ENCODE measurements at regions of chr11 and their contacts with region 1.

Region 1: GRCh38 chr11:11841723-11842420 is at the start of gene USP47:
- DNase-seq: peak; percentile 79
- ATAC-seq: peak; percentile 68
- H3K4me3 ChIP-seq: peak within 1 kb of the TSS; percentile 95
- H3K27ac ChIP-seq: peak within 1 kb of the TSS; percentile 72
- H3K4me1 ChIP-seq: peaks cover 33% of the 10 kb centered on the region
- H3K27me3 ChIP-seq: no peaks in the 10 kb centered on the region
- CTCF ChIP-seq: peak; percentile 54
- total RNA-seq, gene USP47: 33.5 and 45.2 TPM in 2 replicates

Region 2: DNA sequence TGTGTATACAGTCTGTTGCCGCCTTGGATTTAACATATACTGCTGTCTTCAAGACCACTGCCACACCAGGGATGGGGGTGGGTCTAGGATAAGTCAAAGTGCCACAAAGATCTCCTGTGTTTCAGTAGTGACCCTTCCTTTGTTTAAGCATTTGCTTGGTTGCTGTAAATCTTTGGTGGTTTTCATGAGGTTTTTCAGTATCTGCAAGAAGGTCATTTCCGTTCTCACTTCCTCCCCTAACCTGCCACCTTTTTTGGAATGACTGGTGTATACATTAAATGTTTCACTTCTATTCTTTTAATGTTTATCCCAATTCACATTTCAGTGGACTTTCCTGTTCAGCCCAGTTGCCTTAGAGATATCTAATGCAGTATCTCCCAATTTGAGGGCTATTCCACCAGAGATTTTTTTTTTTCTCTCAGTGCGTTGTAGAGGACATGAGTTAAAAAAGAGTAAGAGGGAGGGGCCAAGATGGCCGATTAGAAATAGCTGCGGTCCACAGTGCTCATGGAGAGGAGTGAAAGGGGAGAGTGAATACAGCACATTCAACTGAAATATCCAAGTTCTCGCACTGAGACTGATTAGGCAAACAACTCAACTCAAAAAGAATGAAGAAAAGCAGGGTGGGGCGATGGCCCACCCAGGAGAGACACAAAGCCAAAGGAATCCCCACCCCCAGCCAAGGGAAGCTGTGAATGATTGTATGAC is 43.1 kb after region 1 on chr11:
- CTCF ChIA-PET with region 1: no interaction called
- POLR2A ChIA-PET with region 1: interaction called, 5 read pairs
- intact Hi-C with region 1: loop called (anchors 5 kb)
- DNase-seq: no peak
- ATAC-seq: no peak
- H3K4me3 ChIP-seq: no peak overlapping the region
- H3K27ac ChIP-seq: no peak overlapping the region
- H3K4me1 ChIP-seq: 0 out of 2 replicates have a peak, but pooled peaks cover 6% of the 10 kb centered on the region
- H3K27me3 ChIP-seq: no peaks in the 10 kb centered on the region
- CTCF ChIP-seq: no peak

Measured in PC-3 (cell line).